Activated B cell treated with CpG ODN at 0.5 μM for 24 hours (primary cell): ENCODE measurements at regions of chr15 and their contacts with region 1.

Region 1: DNA sequence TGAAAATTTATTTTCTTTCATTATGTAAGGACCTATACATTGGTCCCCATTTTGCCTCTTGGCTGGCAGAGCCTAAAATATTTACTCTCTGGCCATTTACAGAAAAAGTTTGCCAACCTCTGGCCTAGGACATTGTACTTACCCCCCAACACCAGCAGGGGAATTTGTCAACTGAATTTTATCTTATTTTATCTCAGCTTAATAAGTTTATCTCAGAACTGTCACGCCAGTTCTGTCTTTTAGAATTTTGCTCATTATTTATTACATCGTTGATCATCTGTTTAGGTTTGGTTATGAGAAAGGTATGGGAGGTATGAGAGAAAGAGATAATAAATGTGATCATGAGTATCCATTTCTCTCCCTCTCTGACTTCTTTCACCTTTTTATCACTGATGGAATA is 38.3 kb downstream of the CHD2 start:
- DNase-seq: no peak
- ATAC-seq: no peak
- H3K4me3 Mint-ChIP-seq: no peak overlapping the region
- H3K27ac Mint-ChIP-seq: no peak overlapping the region
- H3K4me1 Mint-ChIP-seq: peaks cover 6% of the 10 kb centered on the region
- H3K27me3 Mint-ChIP-seq: no peaks in the 10 kb centered on the region
- CTCF ChIP-seq: no peak

Region 2: DNA sequence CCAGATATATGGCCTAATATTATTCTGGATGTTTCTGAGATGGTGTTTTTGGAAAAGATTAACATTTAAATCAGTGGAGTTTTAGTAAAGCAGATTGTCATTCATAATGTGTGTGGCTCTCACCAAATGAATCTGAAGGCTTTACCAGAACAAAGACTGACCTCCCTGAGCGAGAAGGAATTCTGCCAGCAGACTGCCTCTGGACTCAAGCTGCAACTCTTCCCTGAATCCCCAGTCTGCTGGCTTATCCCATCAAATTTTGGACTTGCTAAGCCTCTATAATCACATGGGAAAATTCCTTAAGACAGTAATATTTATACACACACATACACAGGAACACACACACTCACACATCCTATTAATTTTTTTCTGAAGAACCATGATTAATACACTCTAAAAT is 385.1 kb before region 1 on chr15:
- CTCF ChIA-PET with region 1: no interaction called
- POLR2A ChIA-PET with region 1: no interaction called
- intact Hi-C with region 1: no loop called
- DNase-seq: no peak
- ATAC-seq: no peak
- H3K4me3 Mint-ChIP-seq: no peak overlapping the region
- H3K27ac Mint-ChIP-seq: no peak overlapping the region
- H3K4me1 Mint-ChIP-seq: no peaks in the 10 kb centered on the region
- H3K27me3 Mint-ChIP-seq: peaks cover 10% of the 10 kb centered on the region
- CTCF ChIP-seq: no peak

Region 3: DNA sequence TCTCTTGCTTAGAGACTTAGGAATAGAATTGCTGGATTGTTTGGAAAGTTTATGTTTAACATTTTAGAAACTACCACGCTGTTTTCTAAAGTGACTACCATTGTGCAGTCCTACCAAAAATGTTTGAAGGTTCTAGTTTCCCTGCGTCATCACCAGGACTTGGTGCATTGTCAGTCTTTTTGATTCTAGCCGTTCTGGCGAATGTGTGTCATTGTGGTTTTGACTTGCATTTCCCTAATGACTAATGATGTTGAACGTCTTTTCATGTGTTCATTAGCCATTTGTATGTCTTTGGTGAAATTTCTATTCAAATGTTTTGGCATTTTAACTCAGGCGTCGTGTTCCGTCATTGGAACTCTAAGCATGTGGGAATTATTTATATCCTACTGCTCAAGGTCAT is 19.7 kb after region 1 on chr15:
- CTCF ChIA-PET with region 1: interaction called, 3 read pairs
- POLR2A ChIA-PET with region 1: no interaction called
- intact Hi-C with region 1: loop called (anchors 1 kb)
- DNase-seq: no peak
- ATAC-seq: peak; percentile 25
- H3K4me3 Mint-ChIP-seq: no peak overlapping the region
- H3K27ac Mint-ChIP-seq: peak overlapping the region; percentile 36
- H3K4me1 Mint-ChIP-seq: peaks cover 10% of the 10 kb centered on the region
- H3K27me3 Mint-ChIP-seq: no peaks in the 10 kb centered on the region
- CTCF ChIP-seq: no peak

Region 4: DNA sequence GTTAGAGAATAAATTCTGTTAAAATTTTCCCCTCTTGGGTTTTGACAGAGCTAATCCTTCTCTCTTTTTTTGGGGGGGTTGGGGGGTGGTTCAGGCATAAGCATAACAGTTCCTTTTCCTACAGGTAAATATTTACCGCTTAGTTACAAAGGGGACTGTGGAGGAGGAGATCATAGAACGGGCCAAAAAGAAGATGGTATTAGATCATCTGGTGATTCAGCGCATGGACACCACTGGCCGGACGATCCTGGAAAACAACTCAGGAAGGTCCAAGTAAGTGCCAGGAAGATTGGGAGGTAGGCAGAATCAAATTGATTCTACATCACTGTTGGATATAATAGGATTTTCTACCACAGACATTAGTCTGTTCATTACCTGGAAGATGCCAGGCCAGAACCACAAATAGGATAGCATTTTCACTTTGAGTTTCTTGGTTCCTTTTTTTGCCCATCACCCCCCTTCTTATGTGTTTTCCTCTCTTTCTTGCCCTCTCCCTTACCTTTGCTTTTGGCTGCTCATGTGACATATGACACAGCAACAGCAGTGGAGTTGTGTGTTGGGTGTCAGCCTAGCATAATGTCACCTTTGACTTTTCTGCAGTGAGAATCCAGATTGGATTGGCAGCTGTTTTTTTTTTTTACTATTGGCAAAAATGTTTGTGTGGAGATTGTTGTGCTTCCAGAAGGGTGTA is 40.8 kb after region 1 on chr15:
- CTCF ChIA-PET with region 1: no interaction called
- POLR2A ChIA-PET with region 1: no interaction called
- intact Hi-C with region 1: loop called (anchors 5 kb)
- DNase-seq: no peak
- ATAC-seq: peak; percentile 52
- H3K4me3 Mint-ChIP-seq: no peak overlapping the region
- H3K27ac Mint-ChIP-seq: peak overlapping the region; percentile 60
- H3K4me1 Mint-ChIP-seq: peaks cover 7% of the 10 kb centered on the region
- H3K27me3 Mint-ChIP-seq: no peaks in the 10 kb centered on the region
- CTCF ChIP-seq: no peak

Region 5: DNA sequence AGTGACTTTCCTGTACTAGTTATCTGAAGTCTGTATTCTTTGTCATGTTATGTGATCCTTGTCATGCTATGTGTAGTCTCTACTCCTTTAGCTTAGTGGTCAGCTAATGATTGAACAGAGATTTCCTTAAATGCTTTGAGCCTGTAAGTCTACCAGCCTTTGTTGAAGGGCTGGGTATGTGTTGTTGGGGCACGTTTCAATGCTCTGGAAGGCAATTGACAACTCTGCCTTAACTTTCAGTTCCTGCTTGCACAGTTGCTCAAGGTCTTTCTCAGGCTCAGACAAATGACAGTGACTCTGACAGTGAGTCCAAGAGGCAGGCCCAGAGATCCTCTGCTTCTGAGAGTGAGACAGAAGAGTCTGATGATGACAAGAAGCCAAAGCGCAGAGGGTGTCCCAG is 51.1 kb after region 1 on chr15:
- CTCF ChIA-PET with region 1: no interaction called
- POLR2A ChIA-PET with region 1: no interaction called
- intact Hi-C with region 1: loop called (anchors 5 kb)
- DNase-seq: no peak
- ATAC-seq: peak; percentile 57
- H3K4me3 Mint-ChIP-seq: no peak overlapping the region
- H3K27ac Mint-ChIP-seq: peak overlapping the region; percentile 28
- H3K4me1 Mint-ChIP-seq: peaks cover 16% of the 10 kb centered on the region
- H3K27me3 Mint-ChIP-seq: no peaks in the 10 kb centered on the region
- CTCF ChIP-seq: no peak

Region 6: DNA sequence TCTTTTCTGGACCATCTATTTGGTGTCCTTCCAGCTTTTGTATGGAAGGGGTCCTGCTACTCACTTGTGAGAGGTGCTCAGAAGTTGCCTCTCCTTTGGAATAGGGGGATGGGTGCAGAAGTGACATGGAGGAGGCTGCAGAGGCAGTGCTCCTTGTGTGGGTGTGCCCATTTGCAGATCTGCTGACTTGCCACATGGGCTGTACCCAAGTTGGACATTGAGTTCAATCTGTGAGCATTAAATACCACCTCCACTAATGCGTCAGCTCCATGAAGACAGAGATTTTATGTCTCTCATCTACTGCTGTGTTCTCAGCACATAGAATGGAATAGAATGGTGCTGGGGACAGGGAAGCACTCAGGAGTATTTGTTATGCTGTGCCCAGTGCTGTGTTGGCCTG is 74.4 kb after region 1 on chr15:
- CTCF ChIA-PET with region 1: no interaction called
- POLR2A ChIA-PET with region 1: no interaction called
- intact Hi-C with region 1: loop called (anchors 5 kb)
- DNase-seq: no peak
- ATAC-seq: no peak
- H3K4me3 Mint-ChIP-seq: no peak overlapping the region
- H3K27ac Mint-ChIP-seq: no peak overlapping the region
- H3K4me1 Mint-ChIP-seq: no peaks in the 10 kb centered on the region
- H3K27me3 Mint-ChIP-seq: no peaks in the 10 kb centered on the region
- CTCF ChIP-seq: no peak